ENCODE measurements at regions of chr1 and their contacts with region 1.

Region 1: GRCh38 chr1:100377590-100378361 is 25.5 kb downstream of the CDC14A start:
- DNase-seq: no peak
- H3K4me3 Mint-ChIP-seq: no peak overlapping the region
- H3K27ac Mint-ChIP-seq: peak overlapping the region; percentile 85
- H3K4me1 Mint-ChIP-seq: peaks cover 71% of the 10 kb centered on the region
- H3K27me3 Mint-ChIP-seq: no peaks in the 10 kb centered on the region

Region 2: DNA sequence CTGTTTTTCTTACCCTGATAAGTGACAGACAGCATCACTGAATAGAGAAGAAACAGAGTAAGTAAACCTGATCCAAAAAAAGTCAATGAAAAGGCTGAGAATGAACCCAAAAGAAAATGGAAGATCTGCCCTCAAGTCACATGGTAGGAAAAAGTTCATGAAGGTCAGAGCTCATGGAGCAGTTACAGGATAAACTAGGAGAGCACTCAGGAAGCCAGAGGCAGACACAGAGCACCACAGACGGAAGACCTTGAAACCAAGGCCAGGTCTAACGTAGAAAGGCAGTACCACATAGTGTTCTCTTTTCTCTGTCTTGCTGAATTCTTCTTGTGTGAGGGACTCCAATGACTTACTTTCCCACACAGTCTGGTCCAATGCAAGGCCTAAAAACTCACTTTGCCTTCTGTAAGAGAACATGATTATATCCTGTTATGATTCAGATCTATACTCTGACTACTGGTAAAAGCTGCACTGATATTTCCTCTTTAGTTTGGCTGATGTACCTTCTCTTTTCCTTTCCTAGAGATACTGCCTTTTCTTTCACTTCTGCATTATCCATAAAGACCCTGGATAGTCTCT is 71.0 kb before region 1 on chr1:
- CTCF ChIA-PET with region 1: no interaction called
- POLR2A ChIA-PET with region 1: no interaction called
- intact Hi-C with region 1: loop called (anchors 2 kb)
- DNase-seq: no peak
- H3K4me3 Mint-ChIP-seq: no peak overlapping the region
- H3K27ac Mint-ChIP-seq: no peak overlapping the region
- H3K4me1 Mint-ChIP-seq: peaks cover 20% of the 10 kb centered on the region
- H3K27me3 Mint-ChIP-seq: no peaks in the 10 kb centered on the region

Region 3: DNA sequence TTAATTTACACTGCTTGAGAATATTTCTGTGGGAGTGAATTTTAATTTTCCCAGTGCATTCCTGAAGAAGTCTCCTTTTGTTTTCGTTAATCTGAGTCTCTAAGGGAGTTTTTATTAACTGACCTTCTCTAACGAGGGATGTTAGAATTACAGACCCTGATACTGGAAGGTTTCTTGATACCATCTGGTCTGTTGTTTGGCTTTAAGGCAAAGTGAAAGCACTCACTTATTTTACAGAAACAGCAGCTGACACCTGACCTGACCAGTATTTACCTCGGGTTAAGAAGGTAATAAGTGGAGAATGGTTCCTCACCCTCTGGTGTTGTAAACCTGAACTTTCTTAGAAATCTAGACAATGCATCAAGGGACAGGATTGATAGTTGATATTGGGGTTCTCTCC is 13.1 kb before region 1 on chr1:
- CTCF ChIA-PET with region 1: interaction called, 3 read pairs
- POLR2A ChIA-PET with region 1: interaction called, 3 read pairs
- intact Hi-C with region 1: loop called (anchors 1 kb)
- DNase-seq: no peak
- H3K4me3 Mint-ChIP-seq: peak overlapping the region; percentile 45
- H3K27ac Mint-ChIP-seq: peak overlapping the region; percentile 68
- H3K4me1 Mint-ChIP-seq: peaks cover 77% of the 10 kb centered on the region
- H3K27me3 Mint-ChIP-seq: no peaks in the 10 kb centered on the region

Region 4: GRCh38 chr1:100423832-100424337 is 46.1 kb after region 1 on chr1:
- CTCF ChIA-PET with region 1: interaction called, 3 read pairs
- POLR2A ChIA-PET with region 1: interaction called, 3 read pairs
- intact Hi-C with region 1: loop called (anchors 2 kb)
- DNase-seq: peak; percentile 33
- H3K4me3 Mint-ChIP-seq: peak overlapping the region; percentile 57
- H3K27ac Mint-ChIP-seq: peak overlapping the region; percentile 76
- H3K4me1 Mint-ChIP-seq: peaks cover 72% of the 10 kb centered on the region
- H3K27me3 Mint-ChIP-seq: no peaks in the 10 kb centered on the region

Region 5: GRCh38 chr1:100452641-100453040 is 74.9 kb after region 1 on chr1:
- CTCF ChIA-PET with region 1: interaction called, 6 read pairs
- POLR2A ChIA-PET with region 1: no interaction called
- intact Hi-C with region 1: loop called (anchors 1 kb)
- DNase-seq: no peak
- H3K4me3 Mint-ChIP-seq: no peak overlapping the region
- H3K27ac Mint-ChIP-seq: peak overlapping the region; percentile 77
- H3K4me1 Mint-ChIP-seq: peaks cover 81% of the 10 kb centered on the region
- H3K27me3 Mint-ChIP-seq: no peaks in the 10 kb centered on the region